ENCODE measurements at regions of chr2 and their contacts with region 1.

Region 1: DNA sequence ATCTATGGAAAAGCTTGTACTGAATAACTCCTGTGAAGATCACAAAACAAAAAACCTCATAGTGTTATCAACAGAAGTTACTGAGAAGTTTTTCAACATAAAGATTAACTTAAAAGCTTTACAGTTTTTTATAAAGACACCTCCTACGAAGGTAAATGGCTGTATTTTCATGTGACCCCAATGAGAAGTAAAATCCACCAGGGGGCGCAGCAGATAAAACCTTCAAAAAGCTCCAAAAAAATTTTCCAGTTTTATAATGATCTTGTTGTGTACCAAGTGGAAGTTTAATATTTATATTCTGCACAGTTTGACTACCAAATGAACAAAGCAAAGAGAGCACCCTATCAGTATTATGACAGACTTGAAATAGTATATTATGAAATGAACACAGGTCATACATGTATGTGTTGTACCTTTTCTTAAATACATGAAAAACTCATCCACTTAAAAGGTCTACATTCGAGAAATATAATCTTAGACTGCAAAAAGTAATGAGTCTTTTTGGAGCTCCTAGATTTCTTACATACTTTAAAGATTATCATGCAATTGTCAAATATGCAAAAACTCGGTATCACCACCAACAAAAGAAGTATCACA is 38.5 kb downstream of the PNO1 start:
- DNase-seq: peak; percentile 17
- ATAC-seq: no peak
- H3K4me3 Mint-ChIP-seq: no peak overlapping the region
- H3K27ac Mint-ChIP-seq: no peak overlapping the region
- H3K4me1 Mint-ChIP-seq: peaks cover 5% of the 10 kb centered on the region
- H3K27me3 Mint-ChIP-seq: no peaks in the 10 kb centered on the region
- CTCF ChIP-seq: peak; percentile 71

Region 2: DNA sequence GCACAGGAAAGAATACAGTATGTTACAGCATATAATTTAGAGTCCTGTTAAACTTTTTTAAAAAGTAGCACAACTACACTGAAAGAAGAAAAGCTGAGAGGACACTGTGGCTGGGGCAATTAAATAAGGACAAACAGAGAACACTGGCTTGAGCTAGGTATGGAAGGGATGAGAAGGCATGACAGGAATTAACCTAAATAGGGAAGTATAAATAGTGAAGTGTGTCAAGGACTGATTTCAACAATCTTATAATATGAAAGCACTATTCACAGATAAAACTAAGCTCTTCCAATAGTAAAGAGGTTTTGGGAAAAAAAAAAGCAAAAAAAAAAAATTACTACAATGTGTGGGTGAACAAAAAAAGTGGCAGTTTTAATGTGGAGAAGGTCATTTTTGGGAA is 10.6 kb after region 1 on chr2:
- CTCF ChIA-PET with region 1: interaction called, 12 read pairs
- POLR2A ChIA-PET with region 1: no interaction called
- DNase-seq: no peak
- ATAC-seq: no peak
- H3K4me3 Mint-ChIP-seq: no peak overlapping the region
- H3K27ac Mint-ChIP-seq: peak overlapping the region; percentile 10; the same call in 1 of the 2 replicates
- H3K4me1 Mint-ChIP-seq: peaks cover 25% of the 10 kb centered on the region
- H3K27me3 Mint-ChIP-seq: no peaks in the 10 kb centered on the region
- CTCF ChIP-seq: no peak

Region 3: DNA sequence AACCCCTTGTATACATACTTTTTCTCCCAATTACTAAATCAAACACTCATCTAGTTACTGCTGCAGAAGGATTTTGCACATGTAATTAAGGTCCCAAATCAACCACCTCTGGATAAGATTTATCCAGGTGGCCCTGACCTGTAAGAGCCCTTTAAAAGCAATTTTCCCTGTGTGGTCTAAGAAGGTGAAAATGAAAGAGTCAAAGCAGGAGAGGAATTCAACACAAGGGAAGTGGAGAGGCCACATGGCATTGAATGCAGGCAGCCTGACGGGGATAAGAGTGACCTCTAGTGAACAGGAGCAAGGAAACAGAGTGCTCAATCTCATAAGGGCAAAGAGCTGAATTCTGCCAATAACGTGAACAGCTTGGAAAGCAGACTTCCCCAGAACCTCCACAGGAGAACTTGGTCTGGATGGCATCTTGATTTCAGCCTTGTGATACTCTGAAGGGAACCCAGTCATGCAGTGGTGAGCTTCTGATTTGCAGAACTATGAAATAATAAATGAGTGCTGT is 29.0 kb after region 1 on chr2:
- CTCF ChIA-PET with region 1: interaction called, 16 read pairs
- POLR2A ChIA-PET with region 1: no interaction called
- DNase-seq: peak; percentile 26
- ATAC-seq: peak; percentile 97
- H3K4me3 Mint-ChIP-seq: no peak overlapping the region
- H3K27ac Mint-ChIP-seq: peak overlapping the region; percentile 68
- H3K4me1 Mint-ChIP-seq: peaks cover 45% of the 10 kb centered on the region
- H3K27me3 Mint-ChIP-seq: no peaks in the 10 kb centered on the region
- CTCF ChIP-seq: no peak

Region 4: DNA sequence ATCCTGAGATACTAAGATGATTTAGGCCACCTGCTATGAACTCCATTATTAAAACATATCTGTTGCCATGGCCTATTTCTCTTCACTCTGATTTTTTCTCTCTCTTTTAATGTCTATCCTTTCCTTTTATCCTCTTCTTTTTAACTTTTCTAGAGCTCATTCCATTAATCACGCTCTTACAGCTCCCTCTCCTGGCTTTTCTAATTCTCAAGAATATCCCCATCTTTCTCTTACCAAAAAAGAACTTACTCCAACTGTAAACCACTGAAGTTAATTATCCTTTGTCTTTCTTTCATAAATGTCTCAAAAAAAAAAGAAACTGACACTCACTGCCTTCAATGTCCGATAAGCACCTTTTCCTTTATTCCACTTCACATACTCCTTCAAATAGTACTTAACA is 48.2 kb after region 1 on chr2:
- CTCF ChIA-PET with region 1: interaction called, 21 read pairs
- POLR2A ChIA-PET with region 1: no interaction called
- DNase-seq: no peak
- ATAC-seq: no peak; the same call in 1 of the 2 replicates
- H3K4me3 Mint-ChIP-seq: no peak overlapping the region
- H3K27ac Mint-ChIP-seq: no peak overlapping the region
- H3K4me1 Mint-ChIP-seq: peaks cover 19% of the 10 kb centered on the region
- H3K27me3 Mint-ChIP-seq: no peaks in the 10 kb centered on the region
- CTCF ChIP-seq: no peak

Region 5: GRCh38 chr2:68282811-68283418 is 86.7 kb after region 1 on chr2:
- CTCF ChIA-PET with region 1: interaction called, 16 read pairs
- POLR2A ChIA-PET with region 1: interaction called, 3 read pairs
- DNase-seq: no peak
- ATAC-seq: peak; percentile 52; the same call in 1 of the 2 replicates
- H3K4me3 Mint-ChIP-seq: no peak overlapping the region
- H3K27ac Mint-ChIP-seq: no peak overlapping the region
- H3K4me1 Mint-ChIP-seq: peaks cover 2% of the 10 kb centered on the region; the same call in 1 of the 2 replicates
- H3K27me3 Mint-ChIP-seq: peaks cover 4% of the 10 kb centered on the region
- CTCF ChIP-seq: peak; percentile 17; the same call in 1 of the 2 replicates

Region 6: DNA sequence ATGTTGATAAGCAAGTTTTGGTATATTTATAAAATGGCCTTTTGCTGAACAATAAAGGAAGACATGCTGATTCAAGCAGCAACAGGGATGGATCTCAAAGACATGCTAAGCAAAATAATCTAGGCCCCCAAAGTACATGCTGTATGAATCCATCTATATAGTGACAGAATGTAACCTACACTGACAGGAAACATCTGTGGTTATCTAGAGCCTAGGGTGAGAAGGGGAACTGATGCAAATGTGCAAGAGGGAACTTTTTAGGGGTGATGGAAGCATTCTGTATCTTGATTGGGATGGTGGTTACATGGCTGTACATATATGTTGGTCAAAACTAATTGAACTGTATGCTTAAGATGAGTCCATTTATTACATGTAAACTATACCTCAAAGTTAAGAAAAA is 99.3 kb after region 1 on chr2:
- CTCF ChIA-PET with region 1: interaction called, 18 read pairs
- POLR2A ChIA-PET with region 1: no interaction called
- DNase-seq: no peak
- ATAC-seq: no peak
- H3K4me3 Mint-ChIP-seq: no peak overlapping the region
- H3K27ac Mint-ChIP-seq: no peak overlapping the region
- H3K4me1 Mint-ChIP-seq: no peaks in the 10 kb centered on the region
- H3K27me3 Mint-ChIP-seq: peaks cover 7% of the 10 kb centered on the region; the same call in 1 of the 2 replicates
- CTCF ChIP-seq: no peak

Region 7: DNA sequence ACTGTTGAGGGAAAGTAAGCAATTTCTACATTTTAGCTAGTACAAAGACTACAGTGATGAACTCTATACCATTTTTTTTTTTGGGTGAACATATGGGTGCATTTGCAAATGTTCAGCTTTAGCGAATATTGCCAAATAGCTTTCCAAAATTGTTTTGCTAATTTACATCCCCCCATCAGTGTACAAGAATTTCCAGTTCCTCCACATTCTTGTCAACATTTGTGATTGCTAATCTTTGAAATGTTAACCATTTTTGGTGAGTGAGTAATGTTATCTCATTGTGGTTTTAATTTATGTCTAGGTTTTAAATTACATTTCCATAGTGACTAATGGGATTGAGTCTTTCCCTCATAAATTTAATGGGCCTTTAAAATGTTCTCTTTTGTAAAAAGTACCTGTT is 140.0 kb after region 1 on chr2:
- CTCF ChIA-PET with region 1: no interaction called
- POLR2A ChIA-PET with region 1: no interaction called
- DNase-seq: no peak
- ATAC-seq: no peak
- H3K4me3 Mint-ChIP-seq: no peak overlapping the region
- H3K27ac Mint-ChIP-seq: no peak overlapping the region
- H3K4me1 Mint-ChIP-seq: peaks cover 18% of the 10 kb centered on the region
- H3K27me3 Mint-ChIP-seq: no peaks in the 10 kb centered on the region
- CTCF ChIP-seq: no peak

Measured in WTC11 (cell line).